ENCODE measurements at regions of chr1 and their contacts with region 1.

Region 1: DNA sequence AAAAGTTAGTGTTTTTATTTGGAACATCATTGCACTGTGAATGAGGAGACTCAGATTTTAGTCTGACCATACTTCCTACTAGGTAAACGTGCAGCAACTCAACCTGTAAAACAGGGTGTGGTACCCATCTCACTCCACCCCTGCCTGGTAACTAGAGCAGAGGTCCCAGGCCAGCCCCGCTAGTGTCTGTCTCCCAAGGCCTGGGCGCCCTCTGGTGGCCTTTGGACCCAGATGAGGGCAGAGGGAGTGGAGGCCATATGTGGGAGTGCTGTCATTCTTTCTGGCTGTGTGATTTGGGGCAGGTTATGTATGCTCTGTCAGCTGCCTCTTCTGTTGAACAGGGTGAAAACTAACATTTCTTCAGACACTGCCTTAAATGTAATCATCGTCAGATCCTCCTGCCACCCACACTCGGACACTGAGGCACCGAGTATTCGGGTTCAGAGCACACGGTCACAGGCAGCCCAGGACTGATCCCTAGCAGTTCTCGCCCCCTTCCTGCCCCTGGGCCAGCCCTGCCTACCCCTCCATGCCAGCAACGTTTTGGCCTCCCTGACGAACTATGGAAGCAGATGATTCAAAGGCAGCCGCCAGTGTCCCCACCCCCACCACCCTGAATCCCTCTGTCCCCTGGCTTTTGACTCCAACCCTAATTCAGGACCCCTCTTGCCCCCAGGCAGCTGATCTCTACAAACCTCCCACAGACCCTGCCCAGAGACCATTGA is 76.0 kb downstream of the CD247 start:
- DNase-seq: peak; percentile 66 to 86 (median 76)
- H3K4me3 ChIP-seq: no peak overlapping the region
- H3K27ac ChIP-seq: no peak overlapping the region
- H3K27me3 ChIP-seq: peaks cover 0 to 2% (median 0%) of the 10 kb centered on the region in 45 donors
- CTCF ChIP-seq: peak; percentile 48 to 93 (median 84)

Region 2: DNA sequence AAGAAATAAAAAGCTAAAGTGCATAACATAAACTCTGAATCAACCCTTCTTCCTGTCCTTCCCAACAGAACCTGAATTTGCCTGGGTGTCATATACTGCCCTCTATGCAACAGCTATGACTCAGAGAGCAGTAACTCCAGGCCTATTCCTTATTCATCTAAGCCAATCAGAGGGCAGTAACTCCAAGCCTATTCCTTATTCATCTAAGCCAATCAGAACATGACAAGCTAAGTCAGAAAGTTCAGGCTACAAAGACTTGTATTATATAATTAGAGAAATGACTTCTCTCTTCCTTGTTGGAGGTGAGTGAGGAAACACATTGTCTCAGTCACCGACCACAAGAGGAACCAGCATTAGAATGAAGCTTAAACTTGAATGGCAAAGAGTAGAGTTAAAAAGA is 540.0 kb before region 1 on chr1:
- intact Hi-C with region 1: loop called in 1 of 2 experiments (anchors 10 kb)
- DNase-seq: no peak
- H3K4me3 ChIP-seq: no peak overlapping the region
- H3K27ac ChIP-seq: no peak overlapping the region
- H3K27me3 ChIP-seq: no peaks in the 10 kb centered on the region
- CTCF ChIP-seq: no peak

Region 3: GRCh38 chr1:167066333-167067122 is 375.8 kb before region 1 on chr1:
- intact Hi-C with region 1: loop called (anchors 1 to 5 kb)
- DNase-seq: peak; percentile 60 to 89 (median 78)
- H3K4me3 ChIP-seq: peak overlapping the region in 54 of 59 donors; percentile 7 to 66 (median 42)
- H3K27ac ChIP-seq: peak overlapping the region in 6 of 59 donors; percentile 0 to 67 (median 42)
- H3K27me3 ChIP-seq: no peaks in the 10 kb centered on the region
- CTCF ChIP-seq: peak; percentile 68 to 100 (median 97)

Region 4: DNA sequence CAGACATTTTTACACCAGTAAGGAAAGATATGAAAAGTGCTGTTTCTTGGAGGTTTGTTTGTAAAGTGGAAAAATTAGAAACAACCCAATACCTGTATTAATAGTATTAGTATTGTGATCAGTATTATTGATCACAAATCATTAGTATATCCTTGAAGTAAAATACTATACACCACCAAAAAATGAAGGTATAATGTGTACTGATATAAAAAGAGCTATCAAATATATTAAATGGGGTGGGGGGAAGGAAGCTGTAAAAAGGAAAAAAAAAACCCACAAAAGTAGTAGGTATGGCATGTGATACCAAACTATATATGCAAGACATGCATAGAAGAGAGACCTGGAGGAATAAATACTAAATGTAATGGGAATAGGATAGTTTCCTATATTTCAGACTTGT is 175.3 kb before region 1 on chr1:
- intact Hi-C with region 1: loop called (anchors 1 to 2 kb)
- DNase-seq: no peak
- H3K4me3 ChIP-seq: no peak overlapping the region
- H3K27ac ChIP-seq: no peak overlapping the region
- H3K27me3 ChIP-seq: no peaks in the 10 kb centered on the region
- CTCF ChIP-seq: no peak

Region 5: DNA sequence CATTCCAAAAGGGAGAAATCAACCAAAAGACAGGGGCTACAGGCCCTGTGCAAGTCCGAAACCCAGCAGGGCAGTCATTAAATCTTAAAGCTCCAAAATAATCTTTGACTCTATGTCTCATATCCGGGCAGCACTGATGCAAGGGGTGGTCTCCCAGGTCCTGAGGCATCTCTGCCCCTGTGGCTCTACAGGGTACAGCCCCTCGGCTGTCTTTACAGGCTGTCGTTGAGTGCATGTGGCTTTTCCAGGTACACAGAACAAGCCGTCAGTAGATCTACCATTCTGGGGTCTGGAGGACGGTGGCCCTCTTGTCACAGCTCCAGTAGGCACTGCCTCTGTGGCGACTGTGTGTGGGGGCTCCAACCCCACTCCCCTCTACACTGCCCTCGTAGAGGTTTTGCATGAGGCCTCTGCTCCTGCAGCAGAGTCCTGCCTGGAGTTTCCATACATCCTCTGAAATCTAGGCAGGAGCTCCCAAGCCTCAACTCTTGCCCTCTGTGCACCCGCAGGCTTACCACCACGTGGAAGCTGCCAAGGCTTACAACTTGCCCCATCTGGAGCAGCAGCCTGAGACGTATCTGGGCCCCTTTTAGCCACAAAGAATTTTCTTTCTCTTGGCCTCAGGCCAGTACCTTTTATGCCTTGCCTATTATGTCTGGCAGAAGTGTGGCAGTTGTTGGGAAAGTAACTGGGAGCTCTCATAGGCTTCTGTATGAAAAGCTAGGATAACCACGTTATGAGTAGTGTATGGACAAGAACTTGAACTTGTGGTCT is 169.1 kb before region 1 on chr1:
- intact Hi-C with region 1: loop called in 1 of 2 experiments (anchors 1 kb)
- DNase-seq: no peak
- H3K4me3 ChIP-seq: no peak overlapping the region
- H3K27ac ChIP-seq: peak overlapping the region in 9 of 59 donors; percentile 5 to 44 (median 26)
- H3K27me3 ChIP-seq: no peaks in the 10 kb centered on the region
- CTCF ChIP-seq: no peak

Region 6: DNA sequence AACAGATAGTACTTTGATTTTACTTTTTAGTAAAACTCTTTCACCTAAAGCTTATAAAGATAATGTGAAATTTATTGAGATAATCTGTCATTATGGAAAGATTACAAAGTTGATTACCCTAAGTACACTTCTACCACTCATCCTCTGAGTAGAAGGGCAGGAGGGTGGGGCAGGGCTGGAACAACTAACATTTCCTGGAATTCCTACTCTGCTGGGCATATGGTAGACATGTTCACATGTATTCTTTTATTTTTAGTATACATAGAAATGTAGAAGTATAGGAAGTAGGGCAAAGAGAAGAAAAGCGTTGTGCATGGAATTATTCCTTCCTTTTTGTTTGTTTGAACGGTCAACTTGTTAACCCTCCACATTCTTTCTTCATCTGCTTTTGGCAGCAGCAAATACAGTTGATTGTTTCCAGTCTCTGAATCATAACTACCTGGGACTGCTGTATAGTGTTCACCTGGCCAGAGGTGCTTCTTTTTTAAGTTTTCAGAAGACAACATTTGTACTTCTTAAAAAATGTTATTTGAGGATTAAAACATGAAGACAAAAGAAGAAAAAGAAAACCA is 136.5 kb before region 1 on chr1:
- intact Hi-C with region 1: no loop called
- DNase-seq: no peak
- H3K4me3 ChIP-seq: no peak overlapping the region
- H3K27ac ChIP-seq: no peak overlapping the region
- H3K27me3 ChIP-seq: no peaks in the 10 kb centered on the region
- CTCF ChIP-seq: no peak

Region 7: GRCh38 chr1:167533851-167534300 is 91.6 kb after region 1 on chr1:
- intact Hi-C with region 1: loop called (anchors 2 to 10 kb)
- DNase-seq: peak; percentile 63 to 83 (median 70)
- H3K4me3 ChIP-seq: no peak overlapping the region
- H3K27ac ChIP-seq: peak overlapping the region in 3 of 59 donors; percentile 20 to 37 (median 27)
- H3K27me3 ChIP-seq: no peaks in the 10 kb centered on the region
- CTCF ChIP-seq: peak; percentile 59 to 97 (median 90)